Naive thymus-derived CD4-positive, alpha-beta T cell (primary cell): ENCODE measurements at regions of chr17 and their contacts with region 1.

Region 1: DNA sequence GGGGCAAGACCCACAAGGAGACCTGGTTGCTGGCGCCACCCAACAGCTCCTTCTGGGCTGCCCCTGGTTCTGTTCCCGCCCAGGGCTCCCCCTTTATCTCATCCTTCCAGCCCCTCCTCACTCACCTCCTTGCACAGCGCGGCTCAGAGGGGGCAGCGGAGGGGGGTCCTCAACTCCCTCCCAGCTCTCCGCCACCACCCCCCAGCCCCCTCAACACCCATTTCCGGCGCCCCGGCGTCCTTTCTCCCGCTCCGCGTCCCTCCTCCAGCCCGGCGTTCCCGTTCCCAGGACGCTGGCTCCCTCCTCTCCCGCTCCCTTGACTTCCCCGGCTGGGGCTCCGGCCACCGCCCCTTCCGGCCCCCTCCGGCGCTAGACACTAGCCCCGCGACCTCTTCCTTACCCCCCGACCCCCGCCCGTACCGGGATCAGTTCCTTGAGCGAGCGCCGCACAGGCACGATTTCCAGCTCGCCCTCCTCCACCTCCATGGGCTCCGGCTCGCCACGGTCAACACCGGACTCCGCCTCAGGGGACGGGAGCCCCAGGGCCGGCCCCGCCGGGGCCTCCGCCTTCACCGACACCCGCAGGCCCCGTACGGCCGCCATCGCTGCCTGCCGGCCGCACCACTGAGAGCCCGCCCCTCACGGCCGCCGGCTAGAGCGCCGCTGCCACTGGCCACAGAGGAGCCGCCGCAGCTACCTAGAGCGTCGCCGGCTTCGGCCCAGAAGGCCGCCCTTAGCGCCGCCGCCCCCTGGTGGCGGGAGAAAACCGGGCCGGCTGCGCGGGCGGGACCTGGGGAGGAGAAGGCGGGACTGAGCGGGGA is at the start of gene NCBP3:
- DNase-seq: peak; percentile 79 to 98 (median 90)
- ATAC-seq: peak; percentile 98
- H3K4me3 ChIP-seq: peak within 1 kb of the TSS; percentile 83
- H3K4me3 Mint-ChIP-seq: peak within 1 kb of the TSS; percentile 85 to 98 (median 90)
- H3K27ac ChIP-seq: peak within 1 kb of the TSS; percentile 90
- H3K27ac Mint-ChIP-seq: peak within 1 kb of the TSS; percentile 59 to 95 (median 88)
- H3K4me1 ChIP-seq: peaks cover 12 to 17% of the 10 kb centered on the region in 2 donors
- H3K4me1 Mint-ChIP-seq: peaks cover 18 to 33% (median 24%) of the 10 kb centered on the region in 7 donors
- H3K27me3 ChIP-seq: no peaks in the 10 kb centered on the region
- H3K27me3 Mint-ChIP-seq: peaks cover 0 to 13% (median 0%) of the 10 kb centered on the region in 5 donors
- total RNA-seq, gene NCBP3: 40.6 to 49.4 (median 46.7) TPM

Region 2: GRCh38 chr17:3048767-3049471 is 796.9 kb before region 1 on chr17:
- CTCF ChIA-PET with region 1: no interaction called
- POLR2A ChIA-PET with region 1: no interaction called
- intact Hi-C with region 1: loop called in 1 of 2 experiments (anchors 5 kb)
- DNase-seq: peak; percentile 76 to 95 (median 91)
- ATAC-seq: peak; percentile 98
- H3K4me3 ChIP-seq: peak overlapping the region; percentile 83
- H3K4me3 Mint-ChIP-seq: peak overlapping the region; percentile 86 to 94 (median 92)
- H3K27ac ChIP-seq: peak overlapping the region; percentile 60
- H3K27ac Mint-ChIP-seq: peak overlapping the region; percentile 46 to 91 (median 86)
- H3K4me1 ChIP-seq: peaks cover 0 to 6% of the 10 kb centered on the region in 2 donors
- H3K4me1 Mint-ChIP-seq: peaks cover 0 to 15% (median 9%) of the 10 kb centered on the region in 7 donors
- H3K27me3 ChIP-seq: no peaks in the 10 kb centered on the region
- H3K27me3 Mint-ChIP-seq: peaks cover 0 to 6% (median 0%) of the 10 kb centered on the region in 5 donors

Region 3: GRCh38 chr17:3754458-3755334 is 91.1 kb before region 1 on chr17:
- CTCF ChIA-PET with region 1: no interaction called
- POLR2A ChIA-PET with region 1: interaction called, 4 read pairs
- intact Hi-C with region 1: loop called in 1 of 2 experiments (anchors 1 kb)
- DNase-seq: peak; percentile 46 to 87 (median 77)
- ATAC-seq: peak; percentile 98
- H3K4me3 ChIP-seq: peak overlapping the region; percentile 59
- H3K4me3 Mint-ChIP-seq: peak overlapping the region in 7 of 10 donors; percentile 17 to 77 (median 57)
- H3K27ac ChIP-seq: peak overlapping the region; percentile 80
- H3K27ac Mint-ChIP-seq: peak overlapping the region in 8 of 9 donors; percentile 36 to 87 (median 80)
- H3K4me1 ChIP-seq: peaks cover 20 to 29% of the 10 kb centered on the region in 2 donors
- H3K4me1 Mint-ChIP-seq: peaks cover 16 to 39% (median 27%) of the 10 kb centered on the region in 7 donors
- H3K27me3 ChIP-seq: no peaks in the 10 kb centered on the region
- H3K27me3 Mint-ChIP-seq: no peaks in the 10 kb centered on the region

Region 4: DNA sequence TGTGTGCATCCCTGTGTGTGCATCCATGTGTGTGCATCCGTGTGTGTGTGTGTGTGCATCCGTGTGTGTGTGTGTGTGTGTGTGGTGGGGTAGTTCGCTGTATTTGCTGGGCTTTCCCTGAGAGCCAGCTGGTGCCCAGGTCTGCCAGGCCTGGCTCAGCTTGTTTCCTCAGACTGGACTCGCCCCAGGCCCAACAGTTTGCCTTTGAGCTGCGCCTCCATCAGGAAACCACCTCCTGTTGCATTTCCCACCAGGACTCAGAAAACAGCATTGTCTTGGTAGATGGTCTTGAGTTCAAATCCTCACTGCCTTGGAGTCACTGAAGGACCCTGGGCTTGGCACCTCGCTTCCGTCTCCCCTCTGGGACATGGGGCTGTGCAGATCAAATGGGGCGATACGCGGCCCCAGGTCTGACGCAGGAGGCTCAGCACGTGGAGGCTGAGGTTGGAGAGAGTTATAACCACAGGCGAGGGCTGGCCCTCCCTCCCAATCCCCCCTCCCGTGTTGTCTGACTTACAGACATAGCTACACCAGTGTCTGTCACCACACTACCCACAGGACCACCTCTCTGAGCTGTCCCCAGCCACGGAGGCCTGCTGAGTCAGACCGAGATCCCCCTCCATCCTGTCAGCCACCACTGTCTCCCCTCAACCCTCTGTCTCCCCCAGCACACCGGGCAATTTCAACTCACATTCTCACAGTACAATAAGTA is 49.6 kb before region 1 on chr17:
- CTCF ChIA-PET with region 1: no interaction called
- POLR2A ChIA-PET with region 1: no interaction called
- intact Hi-C with region 1: no loop called
- DNase-seq: peak in 1 of 9 donors; percentile 41
- ATAC-seq: peak; percentile 79
- H3K4me3 ChIP-seq: no peak overlapping the region
- H3K4me3 Mint-ChIP-seq: peak overlapping the region in 1 of 10 donors; percentile 46
- H3K27ac ChIP-seq: no peak overlapping the region
- H3K27ac Mint-ChIP-seq: peak overlapping the region in 3 of 9 donors; percentile 23 to 49 (median 24)
- H3K4me1 ChIP-seq: peaks cover 0 to 29% of the 10 kb centered on the region in 2 donors
- H3K4me1 Mint-ChIP-seq: peaks cover 0 to 30% (median 7%) of the 10 kb centered on the region in 7 donors
- H3K27me3 ChIP-seq: no peaks in the 10 kb centered on the region
- H3K27me3 Mint-ChIP-seq: no peaks in the 10 kb centered on the region

Region 5: DNA sequence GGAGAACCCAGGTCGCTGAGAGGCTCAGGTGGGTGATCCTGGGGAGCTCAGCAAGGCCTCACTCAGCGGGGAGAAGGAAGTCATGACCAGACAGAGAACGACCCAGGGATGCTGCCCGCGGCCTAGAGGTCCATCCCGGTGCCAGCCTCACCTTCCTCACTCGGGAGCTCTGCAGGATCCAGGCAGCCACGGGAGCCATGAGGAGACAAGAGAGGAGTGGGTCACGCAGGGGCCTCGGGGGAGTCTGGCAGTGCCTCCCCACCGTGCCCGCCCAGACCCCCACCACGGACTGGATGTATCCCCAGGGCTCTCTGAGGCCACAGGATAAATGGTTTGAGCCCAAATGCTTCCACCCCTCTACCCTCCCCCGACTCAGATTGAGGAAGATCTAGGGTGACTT is 107.7 kb after region 1 on chr17:
- CTCF ChIA-PET with region 1: no interaction called
- POLR2A ChIA-PET with region 1: no interaction called
- intact Hi-C with region 1: no loop called
- DNase-seq: no peak
- ATAC-seq: no peak
- H3K4me3 ChIP-seq: no peak overlapping the region
- H3K4me3 Mint-ChIP-seq: no peak overlapping the region
- H3K27ac ChIP-seq: no peak overlapping the region
- H3K27ac Mint-ChIP-seq: no peak overlapping the region
- H3K4me1 ChIP-seq: peaks cover 0 to 14% of the 10 kb centered on the region in 2 donors
- H3K4me1 Mint-ChIP-seq: peaks cover 17 to 28% (median 26%) of the 10 kb centered on the region in 7 donors
- H3K27me3 ChIP-seq: no peaks in the 10 kb centered on the region
- H3K27me3 Mint-ChIP-seq: no peaks in the 10 kb centered on the region

Region 6: DNA sequence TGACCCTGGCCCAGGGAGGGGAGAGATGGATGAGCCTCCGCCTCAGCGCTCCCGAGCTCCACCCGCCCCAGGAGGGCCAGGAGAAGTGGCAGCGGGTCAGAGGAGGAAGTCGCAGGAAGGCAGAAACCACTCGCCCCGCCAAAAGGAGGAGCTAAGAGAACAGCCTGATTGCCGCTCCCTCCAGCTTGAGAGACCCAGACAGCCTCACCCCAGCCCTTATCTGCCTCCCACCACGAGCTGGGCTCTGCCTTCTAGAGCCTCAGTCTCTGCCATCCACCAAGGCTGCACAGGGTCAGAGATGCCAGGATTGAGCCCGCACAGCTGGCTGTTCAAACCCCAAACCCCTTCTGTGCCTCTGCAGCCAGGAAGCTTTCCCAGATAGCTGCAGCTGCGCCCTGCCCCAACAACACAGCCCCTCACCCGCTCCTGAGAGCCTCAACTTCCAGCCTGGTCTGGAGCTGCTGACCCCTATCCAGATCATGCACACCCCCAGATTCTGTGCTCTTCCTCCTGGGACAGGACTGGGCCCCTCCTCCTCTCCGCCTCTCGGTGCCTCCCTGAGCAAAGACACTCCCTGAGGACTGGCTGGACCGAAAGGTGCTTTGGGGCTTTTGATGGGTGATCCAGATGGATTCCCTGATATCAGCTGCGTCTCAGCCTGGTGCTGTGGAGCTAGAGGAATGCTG is 119.4 kb after region 1 on chr17:
- CTCF ChIA-PET with region 1: no interaction called
- POLR2A ChIA-PET with region 1: interaction called, 5 read pairs
- intact Hi-C with region 1: loop called (anchors 1 kb)
- DNase-seq: peak; percentile 37 to 71 (median 66)
- ATAC-seq: peak; percentile 64
- H3K4me3 ChIP-seq: peak overlapping the region; percentile 69
- H3K4me3 Mint-ChIP-seq: peak overlapping the region; percentile 88 to 96 (median 94)
- H3K27ac ChIP-seq: peak overlapping the region; percentile 75
- H3K27ac Mint-ChIP-seq: peak overlapping the region; percentile 82 to 97 (median 94)
- H3K4me1 ChIP-seq: peaks cover 31 to 36% of the 10 kb centered on the region in 2 donors
- H3K4me1 Mint-ChIP-seq: peaks cover 34 to 50% (median 44%) of the 10 kb centered on the region in 7 donors
- H3K27me3 ChIP-seq: no peaks in the 10 kb centered on the region
- H3K27me3 Mint-ChIP-seq: peaks cover 0 to 4% (median 0%) of the 10 kb centered on the region in 5 donors

Region 7: DNA sequence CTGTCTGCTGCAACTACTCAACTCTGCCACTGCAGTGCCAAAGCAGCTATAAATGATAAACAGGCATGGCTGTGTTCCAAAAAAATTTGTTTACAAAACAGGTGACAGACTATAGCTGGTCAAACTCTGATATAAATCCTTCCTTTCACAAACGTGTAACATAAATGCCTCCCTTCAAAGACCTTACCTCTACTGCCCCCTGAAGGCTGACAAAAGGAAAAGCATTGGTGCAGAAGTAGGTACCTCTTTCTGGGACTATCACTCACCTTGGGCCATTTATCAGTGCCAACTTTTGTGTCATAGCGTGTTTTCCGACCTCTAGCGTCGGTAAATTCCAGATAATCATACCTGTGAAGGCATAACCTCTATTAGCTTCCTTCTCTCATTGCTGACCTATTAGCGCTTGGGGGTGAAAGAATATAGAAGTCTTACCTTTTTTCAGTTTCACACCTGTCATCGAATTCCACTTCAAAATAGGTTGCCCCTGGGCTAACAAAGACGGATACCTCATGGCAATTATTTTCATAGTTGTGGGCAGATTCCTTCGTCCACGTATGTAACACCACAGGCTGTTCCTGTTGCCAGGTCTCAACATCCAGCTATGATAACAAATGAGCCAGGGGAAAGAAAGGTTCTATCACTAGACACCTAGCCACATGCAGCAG is 229.1 kb after region 1 on chr17:
- CTCF ChIA-PET with region 1: interaction called, 6 read pairs
- POLR2A ChIA-PET with region 1: no interaction called
- intact Hi-C with region 1: loop called (anchors 1 to 10 kb)
- DNase-seq: peak in 7 of 9 donors; percentile 9 to 56 (median 42)
- ATAC-seq: peak; percentile 75
- H3K4me3 ChIP-seq: no peak overlapping the region
- H3K4me3 Mint-ChIP-seq: no peak overlapping the region
- H3K27ac ChIP-seq: no peak overlapping the region
- H3K27ac Mint-ChIP-seq: peak overlapping the region in 2 of 9 donors; percentile 39 to 41
- H3K4me1 ChIP-seq: no peaks in the 10 kb centered on the region
- H3K4me1 Mint-ChIP-seq: no peaks in the 10 kb centered on the region
- H3K27me3 ChIP-seq: no peaks in the 10 kb centered on the region
- H3K27me3 Mint-ChIP-seq: no peaks in the 10 kb centered on the region